HAP-1 (cell line): ENCODE measurements at regions of chr16 and their contacts with region 1.

Region 1: DNA sequence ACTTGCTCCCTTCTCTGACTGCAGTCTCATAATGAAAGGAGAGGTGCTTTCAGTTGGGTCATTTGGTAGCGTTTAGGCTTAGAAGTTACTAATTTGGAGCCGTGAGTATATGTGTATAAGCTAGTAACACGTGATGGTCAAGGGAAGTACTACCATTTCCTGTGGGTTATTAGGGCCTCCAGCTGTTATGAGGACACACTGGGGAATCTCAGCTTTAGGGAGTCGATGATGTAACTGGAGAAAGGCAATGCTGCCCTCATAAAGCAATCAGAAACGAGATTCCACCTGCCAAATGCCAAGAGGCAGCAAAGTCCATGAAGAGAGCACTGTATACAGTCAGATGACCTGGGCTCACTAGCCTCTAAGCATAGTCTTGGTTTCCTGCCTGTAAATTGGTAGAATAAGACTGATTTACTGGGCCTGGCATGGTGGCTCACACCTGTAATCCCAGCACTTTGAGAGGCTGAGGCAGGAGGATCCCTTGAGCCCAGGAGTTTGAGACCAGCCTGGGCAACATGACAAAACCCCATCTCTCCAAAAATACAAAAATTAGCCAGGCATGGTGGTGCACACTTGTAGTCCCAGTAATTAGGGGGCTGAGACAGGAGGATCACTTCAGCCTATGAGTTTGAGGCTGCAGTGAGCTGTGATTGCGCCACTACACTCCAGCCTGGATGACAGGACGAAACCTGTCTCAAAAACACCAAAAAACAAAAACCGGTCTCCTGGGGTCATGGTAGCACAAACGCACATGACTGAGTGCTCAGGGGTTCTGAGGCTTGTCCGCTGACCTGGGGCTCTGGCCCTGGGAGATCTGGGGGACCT is 53.0 kb downstream of the SF3B3 start:
- DNase-seq: no peak
- H3K4me3 ChIP-seq: no peak overlapping the region
- H3K4me1 ChIP-seq: no peaks in the 10 kb centered on the region
- H3K27me3 ChIP-seq: no peaks in the 10 kb centered on the region

Region 2: GRCh38 chr16:70646260-70647241 is 69.9 kb after region 1 on chr16 and contains the start of gene IL34:
- in situ Hi-C with region 1: loop called (anchors 5 kb)
- DNase-seq: peak in 1 of 2 experiments; percentile 54
- H3K4me3 ChIP-seq: no peak within 1 kb of the TSS
- H3K4me1 ChIP-seq: no peaks in the 10 kb centered on the region
- H3K27me3 ChIP-seq: no peaks in the 10 kb centered on the region

Region 3: GRCh38 chr16:70685938-70686375 is 109.3 kb after region 1 on chr16 and contains the start of gene MTSS2:
- in situ Hi-C with region 1: no loop called
- DNase-seq: peak; percentile 71 to 91
- H3K4me3 ChIP-seq: peak within 1 kb of the TSS; percentile 74
- H3K4me1 ChIP-seq: no peaks in the 10 kb centered on the region; the same call in 1 of the 2 replicates
- H3K27me3 ChIP-seq: no peaks in the 10 kb centered on the region